CD8-positive, alpha-beta T cell (primary cell): ENCODE measurements at regions of chr1 and their contacts with region 1.

Region 1: GRCh38 chr1:51192213-51192843 is 43.7 kb upstream of the RNF11 start:
- DNase-seq: peak in 8 of 9 experiments; percentile 24 to 67 (median 56)
- ATAC-seq: no peak
- H3K4me3 ChIP-seq: no peak overlapping the region
- H3K4me3 Mint-ChIP-seq: no peak overlapping the region
- H3K27ac ChIP-seq: no peak overlapping the region
- H3K27ac Mint-ChIP-seq: no peak overlapping the region
- H3K4me1 ChIP-seq: no peaks in the 10 kb centered on the region
- H3K4me1 Mint-ChIP-seq: no peaks in the 10 kb centered on the region
- H3K27me3 ChIP-seq: no peaks in the 10 kb centered on the region
- H3K27me3 Mint-ChIP-seq: peaks cover 6% of the 10 kb centered on the region
- CTCF ChIP-seq: peak; percentile 82

Region 2: GRCh38 chr1:50368179-50369012 is 823.9 kb before region 1 on chr1:
- CTCF ChIA-PET with region 1: interaction called, 3 read pairs
- POLR2A ChIA-PET with region 1: no interaction called
- intact Hi-C with region 1: loop called in 1 of 2 experiments (anchors 5 kb)
- DNase-seq: peak in 7 of 9 experiments; percentile 1 to 40 (median 26)
- ATAC-seq: no peak
- H3K4me3 ChIP-seq: no peak overlapping the region
- H3K4me3 Mint-ChIP-seq: no peak overlapping the region
- H3K27ac ChIP-seq: no peak overlapping the region
- H3K27ac Mint-ChIP-seq: no peak overlapping the region
- H3K4me1 ChIP-seq: no peaks in the 10 kb centered on the region
- H3K4me1 Mint-ChIP-seq: no peaks in the 10 kb centered on the region
- H3K27me3 ChIP-seq: peaks cover 3 to 5% of the 10 kb centered on the region in 2 experiments
- H3K27me3 Mint-ChIP-seq: peaks cover 38% of the 10 kb centered on the region
- CTCF ChIP-seq: peak; percentile 67

Region 3: GRCh38 chr1:50873458-50874187 is 318.7 kb before region 1 on chr1:
- CTCF ChIA-PET with region 1: interaction called, 52 read pairs
- POLR2A ChIA-PET with region 1: interaction called, 4 read pairs
- intact Hi-C with region 1: loop called in 1 of 2 experiments (anchors 1 kb)
- DNase-seq: peak; percentile 31 to 71 (median 56)
- ATAC-seq: peak; percentile 62
- H3K4me3 ChIP-seq: no peak overlapping the region
- H3K4me3 Mint-ChIP-seq: peak overlapping the region; percentile 62
- H3K27ac ChIP-seq: no peak overlapping the region
- H3K27ac Mint-ChIP-seq: no peak overlapping the region
- H3K4me1 ChIP-seq: no peaks in the 10 kb centered on the region
- H3K4me1 Mint-ChIP-seq: peaks cover 21% of the 10 kb centered on the region
- H3K27me3 ChIP-seq: no peaks in the 10 kb centered on the region
- H3K27me3 Mint-ChIP-seq: no peaks in the 10 kb centered on the region
- CTCF ChIP-seq: peak; percentile 68

Region 4: GRCh38 chr1:50936321-50936720 is 256.0 kb before region 1 on chr1:
- CTCF ChIA-PET with region 1: interaction called, 16 read pairs
- POLR2A ChIA-PET with region 1: no interaction called
- intact Hi-C with region 1: no loop called
- DNase-seq: no peak
- ATAC-seq: no peak
- H3K4me3 ChIP-seq: no peak overlapping the region
- H3K4me3 Mint-ChIP-seq: no peak overlapping the region
- H3K27ac ChIP-seq: no peak overlapping the region
- H3K27ac Mint-ChIP-seq: no peak overlapping the region
- H3K4me1 ChIP-seq: no peaks in the 10 kb centered on the region
- H3K4me1 Mint-ChIP-seq: peaks cover 33% of the 10 kb centered on the region
- H3K27me3 ChIP-seq: no peaks in the 10 kb centered on the region
- H3K27me3 Mint-ChIP-seq: no peaks in the 10 kb centered on the region
- CTCF ChIP-seq: no peak

Region 5: GRCh38 chr1:50985094-50985493 is 207.2 kb before region 1 on chr1:
- CTCF ChIA-PET with region 1: no interaction called
- POLR2A ChIA-PET with region 1: no interaction called
- intact Hi-C with region 1: no loop called
- DNase-seq: no peak
- ATAC-seq: no peak
- H3K4me3 ChIP-seq: no peak overlapping the region
- H3K4me3 Mint-ChIP-seq: no peak overlapping the region
- H3K27ac ChIP-seq: no peak overlapping the region
- H3K27ac Mint-ChIP-seq: no peak overlapping the region
- H3K4me1 ChIP-seq: no peaks in the 10 kb centered on the region
- H3K4me1 Mint-ChIP-seq: no peaks in the 10 kb centered on the region
- H3K27me3 ChIP-seq: no peaks in the 10 kb centered on the region
- H3K27me3 Mint-ChIP-seq: no peaks in the 10 kb centered on the region
- CTCF ChIP-seq: no peak

Region 6: DNA sequence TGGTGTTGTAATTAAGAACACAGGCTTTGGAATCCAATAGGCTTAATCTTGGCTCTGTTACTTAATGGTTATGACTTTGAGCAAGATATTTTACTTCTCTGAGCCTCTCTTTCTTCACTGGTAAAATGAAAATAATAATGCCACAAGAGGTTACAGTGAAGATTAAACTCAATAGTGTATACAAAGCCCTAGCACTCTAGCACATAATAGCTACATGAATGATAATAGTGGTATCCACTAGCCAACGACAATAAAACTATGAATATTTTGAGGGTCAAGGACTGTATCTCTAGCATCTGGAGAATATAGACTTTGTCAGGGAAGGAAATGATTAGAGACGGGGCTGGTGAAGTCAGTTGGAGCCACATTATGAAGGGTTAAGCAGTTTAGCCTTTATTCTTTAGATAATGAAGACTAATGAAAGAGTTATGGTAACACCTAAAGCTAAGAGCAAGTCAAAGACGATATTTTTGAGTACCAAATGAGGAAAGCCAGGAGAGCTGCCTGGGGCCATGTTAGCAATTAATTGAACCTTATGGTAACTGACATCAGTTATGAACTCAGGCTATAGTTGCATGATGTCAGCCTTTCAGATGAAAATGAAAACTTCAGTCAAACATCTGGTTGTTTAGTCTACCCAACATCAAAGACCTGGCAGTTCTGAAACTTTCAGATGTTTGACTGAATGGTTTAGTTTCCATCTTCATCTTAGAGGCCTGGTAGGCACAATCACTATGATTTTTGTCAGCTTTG is 11.0 kb after region 1 on chr1:
- CTCF ChIA-PET with region 1: interaction called, 18 read pairs
- POLR2A ChIA-PET with region 1: no interaction called
- intact Hi-C with region 1: no loop called
- DNase-seq: no peak
- ATAC-seq: no peak
- H3K4me3 ChIP-seq: no peak overlapping the region
- H3K4me3 Mint-ChIP-seq: no peak overlapping the region
- H3K27ac ChIP-seq: no peak overlapping the region
- H3K27ac Mint-ChIP-seq: no peak overlapping the region
- H3K4me1 ChIP-seq: no peaks in the 10 kb centered on the region
- H3K4me1 Mint-ChIP-seq: no peaks in the 10 kb centered on the region
- H3K27me3 ChIP-seq: no peaks in the 10 kb centered on the region
- H3K27me3 Mint-ChIP-seq: no peaks in the 10 kb centered on the region
- CTCF ChIP-seq: no peak

Region 7: GRCh38 chr1:51296383-51297357 is 104.3 kb after region 1 on chr1:
- CTCF ChIA-PET with region 1: interaction called, 15 read pairs
- POLR2A ChIA-PET with region 1: no interaction called
- intact Hi-C with region 1: loop called in 1 of 2 experiments (anchors 10 kb)
- DNase-seq: peak; percentile 40 to 76 (median 69)
- ATAC-seq: peak; percentile 88
- H3K4me3 ChIP-seq: peak overlapping the region; percentile 34 to 46
- H3K4me3 Mint-ChIP-seq: peak overlapping the region; percentile 73
- H3K27ac ChIP-seq: no peak overlapping the region
- H3K27ac Mint-ChIP-seq: no peak overlapping the region
- H3K4me1 ChIP-seq: peaks cover 5% of the 10 kb centered on the region
- H3K4me1 Mint-ChIP-seq: peaks cover 10% of the 10 kb centered on the region
- H3K27me3 ChIP-seq: no peaks in the 10 kb centered on the region
- H3K27me3 Mint-ChIP-seq: no peaks in the 10 kb centered on the region
- CTCF ChIP-seq: peak; percentile 88